Cardiac septum (tissue), 1 donor: ENCODE measurements at regions of chrX and their contacts with region 1.

Region 1: GRCh38 chrX:56978172-56978571 is 17.2 kb downstream of the SPIN3 start:
- DNase-seq: no peak

Region 2: GRCh38 chrX:56744996-56745395 is 233.2 kb before region 1 on chrX:
- intact Hi-C with region 1: loop called (anchors 5 kb)
- DNase-seq: no peak

Region 3: DNA sequence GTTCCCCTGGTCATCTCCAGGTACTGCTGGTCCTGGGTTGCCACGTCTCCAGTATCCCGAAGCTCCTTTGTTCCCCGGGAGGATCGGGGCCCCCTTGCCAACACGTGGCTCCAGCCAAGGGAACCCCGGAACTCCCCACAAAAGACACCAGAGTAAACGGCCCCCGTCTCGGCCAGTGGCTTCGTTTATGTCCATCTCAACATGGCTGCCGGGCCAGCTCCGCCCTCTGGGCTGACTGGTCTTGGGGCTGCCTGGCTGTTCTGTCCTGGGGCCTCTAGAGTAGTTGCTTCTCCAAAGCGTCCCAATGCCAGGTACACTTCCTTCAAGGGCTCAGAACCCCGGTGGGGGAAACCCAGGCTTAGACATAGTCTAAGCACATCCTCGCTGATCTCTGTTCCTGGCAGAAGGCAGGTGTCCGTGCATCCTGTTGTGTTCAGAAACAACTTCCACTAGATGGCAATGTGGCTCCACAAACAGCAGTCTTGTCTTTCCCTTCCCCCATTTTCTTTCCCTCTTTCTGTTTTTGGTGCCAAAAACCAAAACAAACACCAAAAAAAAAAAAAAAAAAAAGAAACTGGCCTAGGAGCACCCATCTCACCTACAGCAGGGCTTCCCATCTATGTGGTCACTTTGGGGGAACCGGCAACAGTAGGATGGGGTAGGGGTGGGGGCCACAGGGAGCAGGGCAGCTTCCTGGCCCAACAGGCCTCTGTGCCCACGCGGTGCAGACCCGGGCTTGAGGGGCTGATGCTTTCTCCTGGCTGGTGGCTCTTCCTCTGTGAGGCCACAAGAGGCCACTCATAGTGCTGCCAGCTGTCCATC is 213.8 kb before region 1 on chrX:
- intact Hi-C with region 1: loop called (anchors 10 kb)
- DNase-seq: peak; percentile 80

Region 4: GRCh38 chrX:56802921-56803849 is 175.0 kb before region 1 on chrX:
- intact Hi-C with region 1: loop called (anchors 10 kb)
- DNase-seq: peak; percentile 87